Ascending aorta (tissue), 2 donors: ENCODE measurements at regions of chr17 and their contacts with region 1.

Region 1: DNA sequence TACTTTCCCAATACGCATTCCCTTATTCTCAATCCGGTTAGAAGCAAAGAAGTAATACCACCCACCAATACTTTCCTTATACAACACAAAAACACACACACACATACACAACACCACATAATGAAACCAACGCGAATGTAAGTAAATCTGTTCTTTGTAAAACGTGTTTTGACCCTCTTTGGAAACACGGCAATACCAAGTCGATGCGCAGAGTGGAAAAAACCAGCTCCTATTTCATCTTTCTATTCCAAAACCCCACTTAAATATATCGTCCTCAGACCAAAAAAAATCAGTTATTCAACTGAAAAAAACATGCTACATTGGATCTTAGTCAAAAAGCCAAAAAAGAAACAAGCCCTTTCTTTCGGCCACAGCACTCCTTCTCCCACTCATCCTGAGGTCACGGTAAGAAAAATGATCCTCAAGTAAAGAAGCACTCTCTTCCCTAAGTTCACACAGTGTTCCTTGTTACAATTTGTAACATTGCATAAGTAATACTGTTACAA is 31.0 kb upstream of the ARL4D start:
- DNase-seq: peak in 1 of 2 donors; percentile 66
- H3K4me3 ChIP-seq: peak overlapping the region; percentile 62 to 70
- H3K27ac ChIP-seq: peak overlapping the region; percentile 100
- H3K4me1 ChIP-seq: peaks cover 2 to 18% of the 10 kb centered on the region in 2 donors
- H3K27me3 ChIP-seq: no peaks in the 10 kb centered on the region
- CTCF ChIP-seq: no peak

Region 2: DNA sequence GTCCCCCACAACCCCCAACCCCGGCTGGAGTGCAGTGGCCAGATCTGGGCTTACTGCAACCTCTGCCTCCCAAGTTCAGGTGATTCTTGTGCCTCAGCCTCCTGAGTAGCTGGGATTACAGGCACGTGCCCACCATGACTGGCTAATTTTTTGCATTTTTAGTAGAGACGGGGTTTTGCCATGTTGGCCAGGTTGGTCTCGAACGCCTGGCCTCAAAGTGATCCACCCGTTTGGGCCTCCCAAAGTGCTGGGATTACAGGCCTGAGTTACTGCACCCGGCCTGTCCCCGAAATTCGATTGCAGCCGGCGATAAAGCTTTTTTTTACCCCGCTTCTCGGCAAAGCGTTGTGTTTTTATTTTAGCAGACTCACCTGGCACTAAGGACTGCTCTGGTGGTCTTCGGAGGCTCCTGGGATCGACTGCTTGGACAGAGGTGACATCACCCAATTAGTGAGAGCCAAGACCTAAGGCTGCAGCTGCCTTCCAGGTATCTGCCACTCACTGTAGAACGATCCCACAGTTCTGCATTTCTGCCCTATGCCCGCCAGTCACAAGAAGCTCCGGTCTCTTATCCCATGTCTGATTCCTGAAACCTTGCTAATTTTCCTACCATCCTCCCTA is 51.2 kb before region 1 on chr17:
- intact Hi-C with region 1: loop called (anchors 2 kb)
- DNase-seq: peak in 1 of 2 donors; percentile 63
- H3K4me3 ChIP-seq: no peak overlapping the region
- H3K27ac ChIP-seq: no peak overlapping the region
- H3K4me1 ChIP-seq: peaks cover 0 to 2% of the 10 kb centered on the region in 2 donors
- H3K27me3 ChIP-seq: no peaks in the 10 kb centered on the region
- CTCF ChIP-seq: no peak

Region 3: DNA sequence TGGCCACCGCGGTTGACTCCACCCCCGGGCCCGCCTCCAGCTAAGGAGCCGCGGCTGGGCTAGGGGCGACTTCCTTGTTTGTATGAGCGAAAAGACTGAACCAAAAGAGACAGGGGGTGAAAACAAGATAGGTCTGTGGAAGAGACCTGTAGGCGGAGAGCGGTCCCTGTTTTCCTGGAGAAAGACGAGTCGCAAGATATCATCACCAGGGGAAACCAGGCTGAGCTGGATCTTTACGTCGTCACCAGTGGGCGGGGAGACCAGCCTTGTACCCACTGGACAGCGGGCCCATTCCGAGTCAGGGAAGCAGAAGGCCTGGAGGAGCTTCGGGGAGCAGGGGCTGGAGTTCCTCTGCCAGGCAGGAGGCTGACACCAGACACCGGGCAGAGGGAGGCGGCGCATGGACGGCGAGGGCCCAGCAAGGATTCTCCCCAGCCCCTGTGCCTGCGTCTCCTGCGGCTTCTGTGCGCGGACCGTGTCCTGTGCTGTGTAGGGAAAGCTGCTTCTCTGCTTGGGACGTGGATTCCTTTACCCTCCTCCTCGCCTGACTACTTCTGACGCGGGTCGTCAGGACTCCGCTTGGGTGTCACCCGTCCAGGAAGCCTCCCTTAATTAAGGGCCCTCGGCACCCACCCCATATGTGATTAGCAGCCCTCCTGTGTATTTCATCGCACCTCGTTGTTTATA is 20.7 kb after region 1 on chr17:
- intact Hi-C with region 1: loop called (anchors 1 kb)
- DNase-seq: peak; percentile 84 to 97
- H3K4me3 ChIP-seq: peak overlapping the region; percentile 61 to 89
- H3K27ac ChIP-seq: peak overlapping the region; percentile 99
- H3K4me1 ChIP-seq: peaks cover 3 to 10% of the 10 kb centered on the region in 2 donors
- H3K27me3 ChIP-seq: no peaks in the 10 kb centered on the region
- CTCF ChIP-seq: no peak